ENCODE measurements at regions of chr16 and their contacts with region 1.

Region 1: DNA sequence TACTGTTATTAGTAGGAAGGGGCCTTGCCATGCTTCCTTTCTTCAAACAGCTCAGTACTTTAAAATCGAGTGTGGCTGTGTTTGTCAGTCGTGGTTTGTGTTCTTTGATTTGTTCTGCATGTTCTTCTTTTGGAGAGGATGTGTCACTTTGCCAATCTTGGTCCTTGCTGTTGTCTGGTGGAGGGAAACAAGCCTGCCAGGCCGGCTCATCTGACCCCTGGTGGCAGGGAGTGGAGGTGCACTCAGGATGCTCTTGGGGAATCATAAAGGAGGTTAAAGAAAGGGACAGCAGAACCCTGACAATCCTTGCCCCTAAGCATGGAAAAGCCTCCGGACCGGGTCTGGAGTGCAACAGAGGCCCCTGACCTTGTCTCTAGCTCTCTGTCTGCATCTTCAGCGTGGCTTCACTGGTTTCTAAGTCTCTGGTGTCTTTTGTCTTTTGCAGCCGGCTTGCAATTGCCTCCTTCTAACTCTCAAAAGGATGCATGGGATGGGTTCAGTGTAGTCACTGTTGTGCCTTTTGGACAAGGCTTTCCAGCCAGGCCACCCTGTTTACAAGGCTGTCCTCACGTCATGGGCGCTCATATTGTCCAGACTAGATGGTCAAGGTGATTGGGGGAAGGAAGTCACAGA is 135.8 kb downstream of the WWOX start:
- DNase-seq: peak; percentile 68
- CTCF ChIP-seq: peak; percentile 92

Region 2: DNA sequence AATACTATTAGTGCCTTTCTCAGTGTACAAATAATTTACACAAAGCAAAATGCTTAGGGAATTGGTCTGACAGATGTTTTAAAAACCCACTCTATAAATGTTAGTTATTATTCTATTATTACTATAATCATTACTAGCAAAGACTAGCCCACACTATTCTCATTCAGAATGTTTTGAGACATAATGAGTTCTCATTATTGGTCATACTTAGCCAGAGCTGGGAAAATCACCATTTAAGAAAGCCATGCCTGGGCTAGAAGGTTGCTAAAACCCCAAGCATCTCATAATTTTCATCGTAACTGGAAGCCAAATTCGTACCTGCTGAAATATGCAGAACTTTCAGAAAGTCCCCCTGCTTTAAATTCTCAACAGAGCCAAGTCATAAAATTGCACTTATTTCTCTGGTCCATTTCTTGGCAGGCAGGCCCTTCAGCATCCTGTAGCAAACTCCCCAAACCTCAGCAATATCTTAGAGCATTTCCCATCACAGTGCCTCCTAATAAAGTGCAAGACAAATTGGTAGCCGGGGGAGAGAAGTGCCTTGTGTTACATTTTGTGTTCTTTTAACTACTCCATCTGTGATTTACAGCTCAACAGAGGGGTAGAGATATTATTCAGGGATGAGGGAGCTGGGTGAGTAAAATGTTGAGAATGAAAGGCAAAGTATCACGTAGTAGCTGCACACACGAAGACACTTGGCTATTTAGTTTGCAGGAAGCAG is 720.6 kb before region 1 on chr16:
- in situ Hi-C with region 1: no loop called
- DNase-seq: no peak
- CTCF ChIP-seq: no peak

Region 3: DNA sequence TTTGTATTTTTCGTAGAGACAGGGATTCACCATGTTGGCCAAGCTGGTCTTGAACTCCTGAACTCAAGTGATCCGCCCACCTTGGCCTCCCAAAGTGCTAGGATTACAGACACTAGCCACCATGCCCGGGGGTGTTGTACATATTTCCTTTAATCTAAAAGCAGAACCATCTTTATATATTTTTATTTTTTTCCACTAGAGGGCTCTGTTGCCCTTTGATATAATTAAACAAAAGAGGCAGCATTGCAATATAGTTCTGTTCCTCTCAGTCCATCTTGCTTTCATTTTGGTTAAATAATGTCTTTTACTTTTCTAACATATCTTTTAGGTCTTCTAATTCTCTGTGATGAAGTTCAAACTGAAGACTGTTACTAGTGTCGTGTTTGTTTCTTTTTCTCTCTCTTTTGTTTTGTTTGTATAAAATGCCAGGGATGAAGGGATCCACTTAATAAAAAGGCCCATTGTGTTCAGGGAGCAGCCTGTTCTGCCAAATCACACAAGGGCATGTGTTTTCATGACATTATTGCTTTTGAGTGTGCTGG is 112.4 kb before region 1 on chr16:
- in situ Hi-C with region 1: loop called (anchors 10 kb)
- DNase-seq: peak; percentile 56
- CTCF ChIP-seq: peak; percentile 34